Activated naive CD4-positive, alpha-beta T cell treated with anti-CD3 and anti-CD28 coated beads for 36 hours (primary cell): ENCODE measurements at regions of chr6 and their contacts with region 1.

Region 1: GRCh38 chr6:161748535-161749416 is 474.9 kb upstream of the AGPAT4 start:
- DNase-seq: peak; percentile 44
- H3K4me3 Mint-ChIP-seq: no peak overlapping the region
- H3K27ac Mint-ChIP-seq: no peak overlapping the region
- H3K4me1 Mint-ChIP-seq: no peaks in the 10 kb centered on the region
- H3K27me3 Mint-ChIP-seq: no peaks in the 10 kb centered on the region

Region 2: DNA sequence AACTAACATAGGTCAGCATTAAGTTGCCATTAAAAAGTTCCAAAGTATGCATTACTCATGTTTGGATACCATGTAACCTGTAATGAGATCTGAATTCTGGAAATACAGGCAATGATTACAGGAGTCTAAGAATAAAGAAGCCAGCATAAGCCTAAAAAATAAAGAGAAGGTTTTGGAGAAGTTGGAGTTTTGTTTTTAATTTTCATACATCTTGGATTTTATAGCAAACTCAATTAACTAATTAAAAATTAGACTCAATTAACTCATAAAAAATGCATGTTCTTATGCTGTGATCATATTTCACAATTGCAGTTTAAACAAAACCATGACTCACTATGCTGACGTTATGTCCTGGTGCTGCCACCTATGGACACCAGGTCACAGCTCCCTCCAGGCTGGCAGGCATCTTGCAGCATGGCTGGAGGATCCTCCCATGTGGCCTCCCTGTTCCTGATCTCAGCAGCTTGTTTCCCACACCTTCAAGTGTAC is 173.9 kb after region 1 on chr6:
- CTCF ChIA-PET with region 1: no interaction called
- intact Hi-C with region 1: loop called (anchors 5 kb)
- DNase-seq: peak; percentile 44
- H3K4me3 Mint-ChIP-seq: no peak overlapping the region
- H3K27ac Mint-ChIP-seq: no peak overlapping the region
- H3K4me1 Mint-ChIP-seq: no peaks in the 10 kb centered on the region
- H3K27me3 Mint-ChIP-seq: no peaks in the 10 kb centered on the region

Region 3: GRCh38 chr6:162358625-162359024 is 609.8 kb after region 1 on chr6:
- CTCF ChIA-PET with region 1: no interaction called
- intact Hi-C with region 1: loop called (anchors 5 kb)
- DNase-seq: no peak
- H3K4me3 Mint-ChIP-seq: no peak overlapping the region
- H3K27ac Mint-ChIP-seq: no peak overlapping the region
- H3K4me1 Mint-ChIP-seq: no peaks in the 10 kb centered on the region
- H3K27me3 Mint-ChIP-seq: no peaks in the 10 kb centered on the region